ENCODE measurements at regions of chr18 and their contacts with region 1.

Region 1: GRCh38 chr18:9102508-9103375 is at the start of gene NDUFV2:
- DNase-seq: peak; percentile 98
- H3K4me3 Mint-ChIP-seq: peak within 1 kb of the TSS; percentile 81
- H3K27ac Mint-ChIP-seq: peak within 1 kb of the TSS; percentile 95
- H3K4me1 Mint-ChIP-seq: peaks cover 43% of the 10 kb centered on the region
- H3K27me3 Mint-ChIP-seq: no peaks in the 10 kb centered on the region
- total RNA-seq, gene NDUFV2: 290 to 303 TPM

Region 2: GRCh38 chr18:9017170-9017904 is 85.4 kb before region 1 on chr18:
- CTCF ChIA-PET with region 1: no interaction called
- intact Hi-C with region 1: loop called (anchors 1 kb)
- DNase-seq: peak; percentile 84
- H3K4me3 Mint-ChIP-seq: peak overlapping the region; percentile 56
- H3K27ac Mint-ChIP-seq: no peak overlapping the region
- H3K4me1 Mint-ChIP-seq: peaks cover 14% of the 10 kb centered on the region
- H3K27me3 Mint-ChIP-seq: peaks cover 8% of the 10 kb centered on the region

Region 3: DNA sequence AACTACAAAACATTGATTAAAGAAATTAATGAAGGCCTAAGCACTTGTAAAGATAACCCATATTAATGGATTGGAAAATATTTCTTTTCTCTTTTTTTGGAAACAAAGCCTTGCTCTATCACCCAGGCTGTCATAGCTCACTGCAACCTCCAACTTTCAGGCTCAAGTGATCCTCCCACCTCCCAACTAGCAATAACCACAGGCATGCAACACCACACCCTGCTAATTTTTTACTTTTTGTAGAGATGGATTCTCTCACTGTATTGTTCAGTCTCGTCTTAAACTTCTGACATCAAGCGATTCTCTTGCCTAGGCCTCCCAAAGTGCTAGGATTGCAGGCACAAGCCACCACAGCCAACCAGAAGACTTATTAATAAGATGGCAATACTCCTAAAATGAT is 73.6 kb before region 1 on chr18:
- CTCF ChIA-PET with region 1: no interaction called
- intact Hi-C with region 1: no loop called
- DNase-seq: no peak
- H3K4me3 Mint-ChIP-seq: no peak overlapping the region
- H3K27ac Mint-ChIP-seq: no peak overlapping the region
- H3K4me1 Mint-ChIP-seq: peaks cover 3% of the 10 kb centered on the region
- H3K27me3 Mint-ChIP-seq: peaks cover 4% of the 10 kb centered on the region

Region 4: GRCh38 chr18:9082711-9083510 is 19.8 kb before region 1 on chr18:
- CTCF ChIA-PET with region 1: interaction called, 8 read pairs
- intact Hi-C with region 1: loop called (anchors 1 kb)
- DNase-seq: peak; percentile 82
- H3K4me3 Mint-ChIP-seq: peak overlapping the region; percentile 67
- H3K27ac Mint-ChIP-seq: peak overlapping the region; percentile 92
- H3K4me1 Mint-ChIP-seq: peaks cover 30% of the 10 kb centered on the region
- H3K27me3 Mint-ChIP-seq: no peaks in the 10 kb centered on the region

Region 5: GRCh38 chr18:9117980-9118841 is 15.5 kb after region 1 on chr18:
- CTCF ChIA-PET with region 1: interaction called, 4 read pairs
- intact Hi-C with region 1: loop called (anchors 1 kb)
- DNase-seq: no peak
- H3K4me3 Mint-ChIP-seq: peak overlapping the region; percentile 57
- H3K27ac Mint-ChIP-seq: peak overlapping the region; percentile 98
- H3K4me1 Mint-ChIP-seq: peaks cover 81% of the 10 kb centered on the region
- H3K27me3 Mint-ChIP-seq: no peaks in the 10 kb centered on the region

Region 6: DNA sequence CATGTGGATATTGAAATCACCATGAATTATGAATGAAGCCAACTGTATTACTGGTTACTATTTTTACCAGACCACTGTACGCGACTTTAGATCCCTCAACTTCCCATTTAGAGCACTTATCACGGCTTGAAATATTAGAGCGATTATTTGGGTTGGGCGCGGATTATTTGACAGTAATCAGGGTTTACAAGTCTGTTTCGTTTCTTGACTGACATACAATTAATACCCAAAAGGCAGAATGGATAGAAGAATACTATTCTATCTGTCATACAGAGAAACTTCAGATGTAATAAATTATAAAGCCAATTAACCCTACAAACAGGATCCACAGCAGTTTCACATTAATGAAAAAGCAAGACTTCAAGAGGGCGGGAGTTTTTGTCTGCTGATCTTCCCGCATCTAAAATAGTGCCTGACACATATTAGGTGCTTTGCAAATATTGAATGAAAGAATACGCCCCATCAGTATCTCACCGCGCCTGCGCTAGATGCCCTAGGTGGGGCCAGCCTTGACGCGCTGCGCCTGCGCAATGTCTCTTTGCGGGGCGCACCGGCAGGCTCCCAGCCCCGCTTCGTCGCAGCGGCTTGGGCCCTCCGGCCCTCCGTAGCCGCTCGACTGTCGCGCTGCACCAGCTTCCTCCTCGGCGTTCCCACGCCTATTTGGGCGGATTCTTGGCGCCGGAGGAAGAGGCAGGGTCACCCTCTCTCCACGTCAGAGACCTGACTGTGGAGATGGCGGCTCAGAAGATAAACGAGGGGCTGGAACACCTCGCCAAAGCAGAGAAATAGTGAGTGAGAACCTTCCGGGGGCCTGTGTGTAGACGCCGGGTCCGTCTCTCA is 1422.8 kb after region 1 on chr18 and contains the start of gene NAPG:
- CTCF ChIA-PET with region 1: no interaction called
- intact Hi-C with region 1: loop called (anchors 10 kb)
- DNase-seq: peak; percentile 88
- H3K4me3 Mint-ChIP-seq: peak within 1 kb of the TSS; percentile 95
- H3K27ac Mint-ChIP-seq: peak within 1 kb of the TSS; percentile 89
- H3K4me1 Mint-ChIP-seq: peaks cover 45% of the 10 kb centered on the region
- H3K27me3 Mint-ChIP-seq: no peaks in the 10 kb centered on the region
- total RNA-seq, gene NAPG: 20.2 to 21.0 TPM

Measured in activated naive CD4-positive, alpha-beta T cell treated with anti-CD3 and anti-CD28 coated beads for 36 hours (primary cell).